ENCODE measurements at regions of chr12 and their contacts with region 1.

Region 1: GRCh38 chr12:59650402-59651228 is 54.8 kb downstream of the SLC16A7 start:
- DNase-seq: no peak
- ATAC-seq: peak; percentile 67

Region 2: GRCh38 chr12:59219148-59219547 is 431.5 kb before region 1 on chr12:
- intact Hi-C with region 1: no loop called
- DNase-seq: no peak
- ATAC-seq: no peak

Region 3: GRCh38 chr12:59548930-59549329 is 101.7 kb before region 1 on chr12:
- intact Hi-C with region 1: no loop called
- DNase-seq: no peak
- ATAC-seq: no peak

Region 4: GRCh38 chr12:59619461-59620240 is 31.0 kb before region 1 on chr12:
- intact Hi-C with region 1: loop called (anchors 5 kb)
- DNase-seq: no peak
- ATAC-seq: no peak